ENCODE measurements at regions of chrX and their contacts with region 1.

Region 1: GRCh38 chrX:51461053-51462044 is 35.0 kb downstream of the NUDT11 start:
- DNase-seq: peak; percentile 30
- CTCF ChIP-seq: peak; percentile 87

Region 2: GRCh38 chrX:51144852-51145442 is 316.4 kb before region 1 on chrX:
- in situ Hi-C with region 1: loop called (anchors 25 kb)
- DNase-seq: peak; percentile 34
- CTCF ChIP-seq: peak; percentile 80

Region 3: GRCh38 chrX:51759055-51759839 is 297.9 kb after region 1 on chrX:
- in situ Hi-C with region 1: no loop called
- DNase-seq: no peak
- CTCF ChIP-seq: no peak